Lower lobe of right lung (tissue), 2 donors: ENCODE measurements at regions of chr18 and their contacts with region 1.

Region 1: DNA sequence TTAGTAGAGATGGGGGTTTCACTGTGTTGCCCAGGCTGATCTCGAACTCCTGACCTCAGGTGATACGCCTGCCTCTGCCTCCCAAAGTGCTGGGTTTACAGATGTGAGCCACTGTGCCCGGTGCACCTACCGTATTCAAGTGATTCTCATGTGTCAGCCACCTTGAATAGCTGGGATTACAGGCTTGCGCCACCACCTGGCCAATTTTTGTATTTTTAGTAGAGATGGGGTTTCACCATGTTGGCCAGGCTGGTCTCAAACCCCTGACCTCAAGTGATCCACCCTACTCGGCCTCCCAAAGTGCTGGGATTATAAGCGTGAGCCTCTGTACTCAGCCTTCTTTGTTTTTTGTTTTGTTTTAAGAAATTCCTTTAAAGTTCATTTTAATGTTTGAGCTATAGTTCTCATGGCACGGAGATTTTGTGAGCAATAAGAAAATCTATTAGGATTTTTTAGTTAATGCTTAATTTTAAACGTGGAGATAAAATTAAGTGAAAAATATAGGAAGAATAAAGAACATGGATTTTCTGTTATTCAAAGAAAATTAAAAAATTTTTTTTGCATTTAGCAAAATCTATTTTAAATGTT is 242.6 kb downstream of the PHLPP1 start:
- DNase-seq: peak; percentile 53
- ATAC-seq: peak; percentile 64 to 65
- H3K4me3 ChIP-seq: no peak overlapping the region
- H3K27ac ChIP-seq: no peak overlapping the region
- H3K4me1 ChIP-seq: peaks cover 13% of the 10 kb centered on the region
- H3K27me3 ChIP-seq: no peaks in the 10 kb centered on the region
- CTCF ChIP-seq: peak; percentile 51

Region 2: GRCh38 chr18:62714671-62715435 is 243.1 kb before region 1 on chr18:
- intact Hi-C with region 1: loop called (anchors 10 kb)
- DNase-seq: peak; percentile 100
- ATAC-seq: peak; percentile 97 to 99
- H3K4me3 ChIP-seq: peak overlapping the region; percentile 71
- H3K27ac ChIP-seq: peak overlapping the region; percentile 90
- H3K4me1 ChIP-seq: peaks cover 39% of the 10 kb centered on the region
- H3K27me3 ChIP-seq: no peaks in the 10 kb centered on the region
- CTCF ChIP-seq: peak; percentile 72